Spleen (tissue), 13 donors: ENCODE measurements at regions of chr20 and their contacts with region 1.

Region 1: DNA sequence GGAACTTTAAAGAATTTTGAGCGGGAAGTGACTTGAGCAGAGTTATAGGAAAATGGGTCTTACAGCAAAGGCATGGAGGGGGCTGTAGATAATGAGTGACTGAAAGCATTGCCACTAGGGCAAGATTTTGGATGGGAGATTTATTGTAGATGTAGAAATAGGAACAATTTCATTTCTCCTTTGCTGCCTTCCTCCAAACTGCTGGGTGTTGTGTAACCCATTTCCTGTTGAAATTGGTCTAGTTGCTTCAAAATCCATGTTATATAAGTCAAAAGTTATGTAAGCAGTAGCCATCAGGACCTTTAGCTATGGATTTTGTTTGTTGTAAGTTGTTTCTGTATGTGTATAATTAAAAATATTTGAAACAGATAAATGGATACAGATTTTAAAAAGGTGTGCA is 11.1 kb downstream of the YWHAB start:
- DNase-seq: no peak
- H3K4me3 ChIP-seq: peak overlapping the region in 1 of 8 donors; percentile 9
- H3K27ac ChIP-seq: peak overlapping the region in 7 of 8 donors; percentile 7 to 72 (median 55)
- H3K4me1 ChIP-seq: peaks cover 63 to 100% (median 92%) of the 10 kb centered on the region in 6 donors
- H3K27me3 ChIP-seq: no peaks in the 10 kb centered on the region
- CTCF ChIP-seq: no peak
- POLR2A ChIP-seq: no peak

Region 2: DNA sequence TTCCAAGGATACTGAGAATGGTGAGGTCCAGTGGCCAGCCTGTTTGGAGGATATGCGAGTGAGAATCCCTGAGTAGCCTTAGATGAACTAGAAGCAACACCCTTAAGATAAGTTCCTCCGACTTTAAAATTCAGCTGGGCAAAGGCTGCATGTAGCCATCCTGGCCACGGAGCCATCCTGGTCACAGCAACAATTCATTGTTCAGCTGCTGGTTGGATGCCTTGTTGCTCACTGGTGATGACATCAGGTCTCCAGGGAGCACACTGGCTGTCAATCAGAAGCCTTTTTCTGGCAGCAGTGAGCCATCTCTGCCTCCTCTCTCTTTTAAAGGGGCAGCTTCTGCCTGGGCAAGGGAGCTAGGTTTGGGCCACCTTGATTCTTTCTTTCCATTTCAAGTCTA is 63.9 kb before region 1 on chr20:
- intact Hi-C with region 1: no loop called
- DNase-seq: no peak
- H3K4me3 ChIP-seq: no peak overlapping the region
- H3K27ac ChIP-seq: no peak overlapping the region
- H3K4me1 ChIP-seq: no peaks in the 10 kb centered on the region
- H3K27me3 ChIP-seq: peaks cover 0 to 35% (median 3%) of the 10 kb centered on the region in 7 donors
- CTCF ChIP-seq: no peak
- POLR2A ChIP-seq: no peak

Region 3: DNA sequence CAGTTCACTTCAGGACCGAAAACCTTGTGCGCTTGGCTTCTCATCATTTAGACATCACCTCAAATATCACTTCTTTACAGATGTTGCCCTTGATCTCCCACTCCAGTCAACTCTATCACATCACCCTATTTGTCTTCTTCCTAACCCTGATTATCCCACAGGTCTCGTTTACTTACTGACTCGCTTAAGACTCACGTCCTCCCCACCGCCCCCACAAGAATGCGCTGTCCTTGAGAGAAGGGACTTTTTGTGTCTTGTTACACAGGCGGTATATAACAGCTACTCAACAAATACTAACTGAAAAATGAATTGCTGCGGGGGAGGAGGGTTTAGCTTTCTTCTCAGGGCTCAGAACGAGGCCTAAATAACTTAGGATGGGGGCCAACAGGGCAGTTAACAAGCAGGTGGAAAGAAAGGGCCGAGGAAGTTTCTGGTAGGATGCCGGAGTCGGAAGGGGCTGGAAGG is 63.1 kb after region 1 on chr20:
- intact Hi-C with region 1: loop called (anchors 10 kb)
- DNase-seq: no peak
- H3K4me3 ChIP-seq: peak overlapping the region; percentile 79 to 98 (median 94)
- H3K27ac ChIP-seq: peak overlapping the region; percentile 58 to 89 (median 86)
- H3K4me1 ChIP-seq: peaks cover 13 to 86% (median 39%) of the 10 kb centered on the region in 6 donors
- H3K27me3 ChIP-seq: no peaks in the 10 kb centered on the region
- CTCF ChIP-seq: no peak
- POLR2A ChIP-seq: no peak

Region 4: DNA sequence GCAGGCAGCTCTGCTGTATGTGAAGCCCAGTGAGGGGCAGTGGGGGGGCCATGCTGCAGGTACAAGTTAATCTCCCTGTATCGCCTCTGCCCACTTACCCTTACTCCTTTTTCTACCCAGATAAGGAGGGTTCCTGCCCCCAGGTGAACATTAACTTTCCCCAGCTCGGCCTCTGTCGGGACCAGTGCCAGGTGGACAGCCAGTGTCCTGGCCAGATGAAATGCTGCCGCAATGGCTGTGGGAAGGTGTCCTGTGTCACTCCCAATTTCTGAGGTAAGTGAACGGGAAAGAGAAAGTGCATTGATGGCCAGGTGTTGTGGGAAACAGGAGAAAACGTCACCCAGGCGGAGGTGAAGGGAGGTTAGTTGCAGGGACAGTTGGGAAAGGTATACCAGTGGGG is 583.2 kb after region 1 on chr20:
- intact Hi-C with region 1: no loop called
- DNase-seq: no peak
- H3K4me3 ChIP-seq: no peak overlapping the region
- H3K27ac ChIP-seq: no peak overlapping the region
- H3K4me1 ChIP-seq: no peaks in the 10 kb centered on the region
- H3K27me3 ChIP-seq: peaks cover 0 to 75% (median 14%) of the 10 kb centered on the region in 7 donors
- CTCF ChIP-seq: no peak
- POLR2A ChIP-seq: no peak